Panc1 (cell line): ENCODE measurements at regions of chr12 and their contacts with region 1.

Region 1: DNA sequence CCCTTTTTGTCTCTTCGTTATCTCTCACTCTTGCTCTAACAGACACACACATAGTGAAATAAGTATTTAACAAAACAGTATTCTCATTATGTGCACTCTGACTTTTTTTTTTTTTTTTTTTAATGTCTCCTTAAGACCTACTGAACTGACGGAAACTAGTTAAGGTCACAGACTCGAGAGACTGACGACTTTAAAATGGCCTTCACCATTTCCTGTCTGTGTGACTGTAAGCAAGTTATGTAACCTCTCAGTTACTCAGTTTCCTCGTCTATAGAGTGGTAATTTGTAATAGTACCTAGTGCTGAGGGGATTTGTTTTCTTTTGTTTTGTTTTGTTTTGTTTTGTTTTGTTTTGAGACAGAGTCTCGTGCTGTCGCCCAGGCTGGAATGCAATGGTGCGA is 284.8 kb downstream of the FBXL14 start:
- DNase-seq: no peak
- ATAC-seq: no peak
- H3K4me3 ChIP-seq: no peak overlapping the region
- H3K27ac ChIP-seq: no peak overlapping the region
- H3K4me1 ChIP-seq: peaks cover 2% of the 10 kb centered on the region; the same call in 1 of the 2 replicates
- H3K27me3 ChIP-seq: no peaks in the 10 kb centered on the region
- CTCF ChIP-seq: no peak

Region 2: GRCh38 chr12:968545-968944 is 341.1 kb before region 1 on chr12:
- CTCF ChIA-PET with region 1: no interaction called
- POLR2A ChIA-PET with region 1: no interaction called
- in situ Hi-C with region 1: no loop called
- intact Hi-C with region 1: no loop called
- DNase-seq: no peak
- ATAC-seq: no peak
- H3K4me3 ChIP-seq: no peak overlapping the region
- H3K27ac ChIP-seq: no peak overlapping the region
- H3K4me1 ChIP-seq: no peaks in the 10 kb centered on the region
- H3K27me3 ChIP-seq: no peaks in the 10 kb centered on the region
- CTCF ChIP-seq: no peak

Region 3: DNA sequence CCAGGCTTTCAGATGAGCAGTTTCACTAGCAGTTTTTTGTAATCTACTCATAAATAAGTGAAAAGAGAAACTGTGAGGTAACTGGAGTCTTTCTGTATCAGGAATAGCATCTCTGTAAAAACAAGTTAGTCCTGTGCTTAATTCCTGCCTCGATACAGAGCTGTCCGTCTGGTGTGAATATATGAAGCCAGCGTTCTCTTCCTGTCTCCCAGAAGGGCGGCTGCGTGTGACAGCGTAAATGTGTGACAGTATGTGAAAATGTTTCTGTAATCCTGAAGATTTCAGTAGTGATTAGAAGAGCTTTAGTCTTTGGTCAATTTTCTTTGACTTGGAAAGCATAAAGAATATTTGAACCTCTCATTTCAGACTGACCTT is 134.5 kb after region 1 on chr12:
- CTCF ChIA-PET with region 1: no interaction called
- POLR2A ChIA-PET with region 1: interaction called, 16 read pairs
- in situ Hi-C with region 1: no loop called
- intact Hi-C with region 1: no loop called
- DNase-seq: no peak
- ATAC-seq: no peak
- H3K4me3 ChIP-seq: no peak overlapping the region
- H3K27ac ChIP-seq: no peak overlapping the region
- H3K4me1 ChIP-seq: no peaks in the 10 kb centered on the region
- H3K27me3 ChIP-seq: no peaks in the 10 kb centered on the region
- CTCF ChIP-seq: no peak

Region 4: DNA sequence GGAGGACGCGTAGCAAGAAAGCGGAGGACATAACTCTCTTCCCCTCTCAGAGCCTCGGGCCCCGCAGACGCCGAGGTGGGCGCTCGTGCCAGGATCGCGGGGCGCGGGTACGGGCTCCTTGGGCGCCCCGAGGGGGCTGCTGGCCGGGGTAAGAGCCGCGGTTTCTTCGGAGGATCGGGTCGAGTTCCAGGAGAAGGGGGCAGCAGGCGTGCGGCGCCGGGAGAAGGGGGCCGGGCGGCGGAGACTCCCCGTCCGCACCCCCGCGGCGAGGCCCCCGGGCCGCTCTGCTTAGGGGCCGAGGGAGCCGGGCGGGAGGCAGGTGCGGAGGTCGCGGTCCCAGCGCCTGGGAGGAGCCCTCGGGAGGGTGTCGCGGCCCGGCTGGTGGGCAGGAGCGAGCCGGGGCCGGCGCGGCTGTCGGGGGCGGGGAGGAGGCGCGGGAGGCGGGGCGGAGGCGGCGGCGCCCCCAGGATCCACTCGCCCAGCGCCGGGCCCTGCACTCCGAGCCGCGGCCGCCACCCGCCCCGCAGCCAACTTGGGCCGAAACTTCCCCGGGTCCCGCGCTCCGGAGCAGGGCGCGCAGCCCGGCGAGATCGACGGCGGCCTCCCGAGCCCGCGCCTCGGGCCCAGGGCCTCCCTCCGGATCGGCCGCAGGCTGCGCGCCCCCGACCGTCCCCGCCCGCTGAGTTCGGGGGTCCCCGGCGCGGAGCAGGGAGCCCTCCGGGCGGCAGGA is 220.4 kb after region 1 on chr12:
- CTCF ChIA-PET with region 1: no interaction called
- POLR2A ChIA-PET with region 1: no interaction called
- in situ Hi-C with region 1: no loop called
- intact Hi-C with region 1: no loop called
- DNase-seq: no peak
- ATAC-seq: peak; percentile 82
- H3K4me3 ChIP-seq: peak overlapping the region; percentile 10 to 51; a peak in 3 of 4 replicates
- H3K27ac ChIP-seq: peak overlapping the region; percentile 69
- H3K4me1 ChIP-seq: peaks cover 26% of the 10 kb centered on the region
- H3K27me3 ChIP-seq: no peaks in the 10 kb centered on the region
- CTCF ChIP-seq: no peak

Region 5: GRCh38 chr12:1630133-1630826 is 320.7 kb after region 1 on chr12:
- CTCF ChIA-PET with region 1: no interaction called
- POLR2A ChIA-PET with region 1: no interaction called
- in situ Hi-C with region 1: no loop called
- intact Hi-C with region 1: no loop called
- DNase-seq: no peak
- ATAC-seq: peak; percentile 52
- H3K4me3 ChIP-seq: peak overlapping the region; percentile 19 to 23; a peak in 1 of 4 replicates
- H3K27ac ChIP-seq: no peak overlapping the region
- H3K4me1 ChIP-seq: peaks cover 4% of the 10 kb centered on the region; the same call in 1 of the 2 replicates
- H3K27me3 ChIP-seq: no peaks in the 10 kb centered on the region
- CTCF ChIP-seq: no peak